ENCODE measurements at regions of chr22 and their contacts with region 1.

Region 1: GRCh38 chr22:46762238-46763050 is at the start of gene TBC1D22A:
- DNase-seq: peak; percentile 95
- H3K4me3 Mint-ChIP-seq: peak within 1 kb of the TSS; percentile 98
- H3K27ac Mint-ChIP-seq: peak within 1 kb of the TSS; percentile 92
- H3K4me1 Mint-ChIP-seq: peaks cover 58% of the 10 kb centered on the region
- H3K27me3 Mint-ChIP-seq: no peaks in the 10 kb centered on the region
- total RNA-seq, gene TBC1D22A: 38.5 to 41.0 TPM

Region 2: GRCh38 chr22:46737976-46738646 is 24.3 kb before region 1 on chr22 and contains the start of gene CERK:
- CTCF ChIA-PET with region 1: interaction called, 8 read pairs
- POLR2A ChIA-PET with region 1: interaction called, 15 read pairs
- DNase-seq: peak; percentile 73
- H3K4me3 Mint-ChIP-seq: peak within 1 kb of the TSS; percentile 99
- H3K27ac Mint-ChIP-seq: peak within 1 kb of the TSS; percentile 100
- H3K4me1 Mint-ChIP-seq: peaks cover 42% of the 10 kb centered on the region
- H3K27me3 Mint-ChIP-seq: no peaks in the 10 kb centered on the region
- total RNA-seq, gene CERK: 68.7 to 73.4 TPM

Region 3: GRCh38 chr22:46748908-46749675 is 13.4 kb before region 1 on chr22:
- CTCF ChIA-PET with region 1: interaction called, 26 read pairs
- POLR2A ChIA-PET with region 1: interaction called, 32 read pairs
- DNase-seq: peak; percentile 68
- H3K4me3 Mint-ChIP-seq: peak overlapping the region; percentile 62
- H3K27ac Mint-ChIP-seq: peak overlapping the region; percentile 91
- H3K4me1 Mint-ChIP-seq: peaks cover 22% of the 10 kb centered on the region
- H3K27me3 Mint-ChIP-seq: no peaks in the 10 kb centered on the region

Region 4: DNA sequence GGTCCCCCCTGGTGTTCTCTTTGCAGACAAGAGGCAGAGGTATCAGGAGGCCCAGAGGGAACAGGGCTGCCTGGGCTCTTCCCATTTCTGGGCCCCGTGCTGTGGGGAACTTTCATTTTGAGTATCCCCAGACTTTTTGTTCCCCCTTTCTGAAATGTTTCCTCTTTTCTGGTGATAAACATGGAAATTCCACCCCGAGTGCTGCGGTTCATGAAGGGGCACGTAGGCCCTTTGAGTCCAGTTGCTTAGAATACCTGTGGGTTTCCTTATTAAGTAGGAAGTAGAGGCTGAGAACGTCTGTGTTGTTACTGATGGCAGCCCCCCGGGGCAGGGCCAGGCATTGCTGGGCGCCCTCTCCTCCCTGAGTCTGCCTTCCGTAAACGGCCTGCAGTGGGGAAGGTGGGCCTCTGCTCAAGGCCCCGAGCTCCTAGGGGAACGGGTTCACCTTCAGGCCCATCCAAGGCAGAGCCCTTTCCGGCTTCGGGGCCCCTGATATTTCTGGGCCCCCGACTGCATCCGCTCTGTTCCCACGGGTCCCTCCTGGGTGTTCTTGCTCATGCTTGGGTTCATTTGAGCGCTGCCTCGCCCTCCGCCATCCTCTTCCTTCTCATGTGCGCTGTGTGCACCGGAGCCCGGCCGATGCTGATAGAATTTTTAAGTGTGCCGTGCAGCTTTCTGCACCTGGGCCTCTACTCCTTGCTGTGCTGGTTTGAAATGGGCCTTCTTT is 12.0 kb after region 1 on chr22:
- CTCF ChIA-PET with region 1: interaction called, 7 read pairs
- POLR2A ChIA-PET with region 1: interaction called, 75 read pairs
- DNase-seq: peak; percentile 39
- H3K4me3 Mint-ChIP-seq: peak overlapping the region; percentile 75
- H3K27ac Mint-ChIP-seq: peak overlapping the region; percentile 90
- H3K4me1 Mint-ChIP-seq: peaks cover 77% of the 10 kb centered on the region
- H3K27me3 Mint-ChIP-seq: no peaks in the 10 kb centered on the region

Region 5: GRCh38 chr22:46783721-46784120 is 21.3 kb after region 1 on chr22:
- CTCF ChIA-PET with region 1: interaction called, 11 read pairs
- POLR2A ChIA-PET with region 1: interaction called, 75 read pairs
- DNase-seq: no peak
- H3K4me3 Mint-ChIP-seq: no peak overlapping the region
- H3K27ac Mint-ChIP-seq: no peak overlapping the region
- H3K4me1 Mint-ChIP-seq: peaks cover 13% of the 10 kb centered on the region
- H3K27me3 Mint-ChIP-seq: no peaks in the 10 kb centered on the region

Region 6: DNA sequence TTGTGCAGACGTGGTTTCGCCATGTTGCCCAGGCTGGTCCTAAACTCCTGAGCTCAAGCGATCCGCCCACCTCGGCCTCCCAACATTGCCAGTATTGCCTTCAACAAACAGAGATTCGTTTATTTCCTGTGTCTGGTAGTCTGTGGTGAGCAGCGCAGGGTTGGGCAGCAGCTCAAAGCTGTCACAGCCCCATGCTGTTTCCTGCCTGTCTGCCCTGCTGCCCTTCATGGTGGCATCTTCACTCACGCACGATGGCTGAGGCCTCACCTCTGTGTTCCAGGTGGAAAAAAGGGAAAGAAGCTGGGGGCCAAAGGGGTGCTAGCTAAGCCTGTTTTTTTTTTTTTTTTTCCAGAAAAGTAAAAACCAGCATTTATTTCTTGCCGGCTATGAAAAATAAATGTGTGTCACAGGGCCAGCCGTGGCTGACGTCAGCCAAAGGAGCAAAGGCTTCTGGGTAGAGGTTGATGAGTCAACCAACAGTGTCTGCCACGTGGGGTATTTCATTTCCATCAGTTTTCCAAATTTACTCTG is 28.8 kb after region 1 on chr22:
- CTCF ChIA-PET with region 1: interaction called, 12 read pairs
- POLR2A ChIA-PET with region 1: interaction called, 48 read pairs
- DNase-seq: peak; percentile 85
- H3K4me3 Mint-ChIP-seq: peak overlapping the region; percentile 78
- H3K27ac Mint-ChIP-seq: peak overlapping the region; percentile 100
- H3K4me1 Mint-ChIP-seq: peaks cover 57% of the 10 kb centered on the region
- H3K27me3 Mint-ChIP-seq: no peaks in the 10 kb centered on the region

Region 7: DNA sequence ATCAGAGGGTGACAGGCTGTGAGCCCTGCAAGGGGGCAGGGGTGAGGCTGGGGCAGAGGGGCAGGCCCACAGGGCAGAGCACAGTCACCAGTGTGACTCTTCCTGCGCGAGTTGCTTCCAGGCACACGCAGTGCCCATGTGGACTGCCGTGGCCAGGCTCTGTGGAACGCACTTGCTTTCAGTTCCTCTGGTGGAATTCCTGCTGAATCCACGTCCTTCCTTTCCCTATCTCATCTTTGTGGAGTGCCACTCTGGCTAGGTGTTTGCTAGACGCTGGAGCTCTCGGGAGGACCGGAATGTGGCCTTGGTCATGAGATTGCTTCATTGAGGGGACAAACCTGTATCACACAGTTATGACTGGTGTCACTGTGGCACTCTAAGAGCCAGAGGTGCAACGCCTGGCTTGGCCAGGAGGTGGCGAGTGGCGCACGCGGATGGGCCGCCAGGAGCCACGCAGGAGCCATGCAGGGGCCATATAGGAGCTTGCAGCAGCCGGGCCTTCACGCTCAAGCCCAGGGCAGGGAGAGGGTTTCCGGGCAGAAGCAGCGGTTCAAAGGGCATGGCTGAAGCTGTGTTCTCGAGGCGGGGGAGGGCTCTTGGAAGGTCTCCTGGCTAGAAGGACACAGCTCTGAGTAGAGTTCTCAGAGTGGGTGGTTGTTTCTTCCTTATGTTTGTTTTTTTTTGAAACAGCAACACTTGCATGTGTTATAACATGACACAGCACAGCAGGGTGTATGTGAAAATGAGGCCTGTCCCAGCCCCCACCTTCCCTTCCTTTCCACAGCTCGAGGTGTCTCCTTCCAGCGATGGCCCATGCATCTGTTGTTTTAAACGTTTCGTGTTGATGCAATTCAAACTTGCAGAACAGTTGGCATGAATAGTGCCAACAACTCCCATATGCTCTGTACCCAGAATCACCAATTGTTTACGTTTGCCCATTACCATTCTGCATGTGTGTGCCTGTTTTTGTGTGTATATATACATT is 36.2 kb after region 1 on chr22:
- CTCF ChIA-PET with region 1: interaction called, 178 read pairs
- POLR2A ChIA-PET with region 1: interaction called, 20 read pairs
- DNase-seq: peak; percentile 80
- H3K4me3 Mint-ChIP-seq: no peak overlapping the region
- H3K27ac Mint-ChIP-seq: no peak overlapping the region
- H3K4me1 Mint-ChIP-seq: peaks cover 16% of the 10 kb centered on the region
- H3K27me3 Mint-ChIP-seq: no peaks in the 10 kb centered on the region

Measured in activated CD4-positive, alpha-beta memory T cell treated with anti-CD3 and anti-CD28 coated beads, Interleukin-2, amount 10 ng/mL, durations not matched to agents 7 days and 5 days (primary cell).